Activated CD8-positive, alpha-beta T cell treated with anti-CD3 and anti-CD28 coated beads, Interleukin-2, amount 10 ng/mL, durations not matched to agents 7 days and 5 days (primary cell): ENCODE measurements at regions of chr19 and their contacts with region 1.

Region 1: GRCh38 chr19:18328340-18329034 is 5.6 kb upstream of the LSM4 start:
- DNase-seq: peak; percentile 95
- ATAC-seq: peak; percentile 100
- H3K4me3 Mint-ChIP-seq: peak overlapping the region; percentile 71
- H3K27ac Mint-ChIP-seq: peak overlapping the region; percentile 2
- H3K4me1 Mint-ChIP-seq: peaks cover 22% of the 10 kb centered on the region
- H3K27me3 Mint-ChIP-seq: no peaks in the 10 kb centered on the region

Region 2: GRCh38 chr19:18224525-18225354 is 103.7 kb before region 1 on chr19:
- CTCF ChIA-PET with region 1: interaction called, 10 read pairs
- POLR2A ChIA-PET with region 1: no interaction called
- DNase-seq: peak; percentile 92
- ATAC-seq: peak; percentile 98
- H3K4me3 Mint-ChIP-seq: peak overlapping the region; percentile 77
- H3K27ac Mint-ChIP-seq: peak overlapping the region; percentile 75
- H3K4me1 Mint-ChIP-seq: peaks cover 23% of the 10 kb centered on the region
- H3K27me3 Mint-ChIP-seq: peaks cover 52% of the 10 kb centered on the region

Region 3: DNA sequence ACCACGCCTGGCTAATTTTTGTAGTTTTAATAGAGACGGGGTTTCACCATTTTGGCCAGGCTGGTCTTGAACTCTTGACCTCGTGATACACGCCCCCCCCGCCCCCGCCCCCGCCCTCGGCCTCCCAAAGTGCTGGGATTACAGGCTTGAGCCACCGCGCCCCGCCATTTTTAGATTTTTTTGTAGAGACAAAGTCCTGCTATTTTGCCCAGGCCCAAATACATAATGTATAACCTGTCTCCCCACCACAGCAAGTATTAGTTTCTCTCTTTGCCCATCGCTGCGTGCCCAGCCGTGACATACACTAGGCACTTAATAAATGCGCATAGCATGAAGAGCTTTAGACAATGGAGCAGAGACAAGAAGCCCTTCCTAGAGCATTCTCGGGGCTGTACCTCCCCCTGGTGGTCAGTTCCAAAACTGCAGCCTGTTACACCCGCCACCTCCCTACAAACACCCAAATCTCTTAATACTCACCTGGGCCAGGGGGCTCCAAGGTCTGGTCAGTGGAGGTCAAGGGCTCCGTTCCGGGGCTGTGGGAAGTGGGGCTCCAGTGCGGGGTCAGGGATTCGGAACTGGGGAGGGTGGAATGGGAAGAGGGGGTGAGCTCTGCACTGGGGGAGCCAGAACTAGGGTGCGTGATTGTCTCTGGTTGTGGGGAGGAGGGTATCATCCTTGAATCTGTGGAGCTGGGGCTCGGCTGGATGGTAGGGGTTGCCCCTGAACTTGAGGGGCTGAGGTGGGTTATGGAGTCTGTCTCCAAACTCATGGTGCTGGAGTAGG is 76.7 kb before region 1 on chr19:
- CTCF ChIA-PET with region 1: interaction called, 20 read pairs
- POLR2A ChIA-PET with region 1: no interaction called
- DNase-seq: peak; percentile 88
- ATAC-seq: peak; percentile 74
- H3K4me3 Mint-ChIP-seq: no peak overlapping the region
- H3K27ac Mint-ChIP-seq: no peak overlapping the region
- H3K4me1 Mint-ChIP-seq: no peaks in the 10 kb centered on the region
- H3K27me3 Mint-ChIP-seq: peaks cover 23% of the 10 kb centered on the region

Region 4: DNA sequence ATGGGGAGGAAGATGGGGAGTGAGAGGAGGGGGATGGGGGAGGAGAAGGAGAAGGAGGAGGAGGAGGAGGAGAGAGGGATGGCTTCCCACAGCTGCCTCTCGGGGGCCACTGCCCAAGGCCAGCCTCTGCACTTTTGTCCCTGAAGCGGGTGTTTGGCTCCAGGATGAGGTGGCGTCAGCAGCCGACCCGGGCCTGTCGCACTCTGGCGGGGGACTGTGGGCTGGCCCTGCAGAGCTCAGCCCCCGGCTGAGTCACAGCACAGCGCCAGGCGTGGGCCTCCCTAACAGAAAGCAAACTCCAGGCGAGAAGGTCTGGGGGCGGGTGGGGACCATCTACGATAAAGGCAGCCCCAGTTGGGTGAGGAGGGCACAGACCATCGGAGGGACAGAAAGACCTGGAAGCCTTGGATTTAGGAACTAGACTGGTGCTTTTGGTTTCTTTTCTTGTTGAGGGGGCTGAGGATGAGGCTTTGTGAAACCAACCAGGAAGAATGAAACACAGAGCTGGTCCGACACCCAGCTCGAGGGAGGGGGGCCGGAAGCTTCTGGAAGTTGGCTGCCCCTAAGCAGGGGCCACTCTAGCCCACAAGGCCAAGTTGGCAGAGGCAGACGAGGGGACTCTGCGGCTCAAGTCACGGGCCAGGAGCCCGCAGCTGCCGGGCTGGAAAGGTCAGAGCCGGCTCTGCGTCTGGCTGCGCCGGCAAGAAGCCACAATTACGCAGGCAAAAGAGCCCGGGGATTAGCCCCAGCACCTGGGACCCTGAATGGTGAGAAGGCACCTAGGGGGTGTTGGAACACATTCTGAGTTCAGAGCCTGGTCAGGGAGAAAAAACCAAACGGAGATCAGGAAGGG is 23.8 kb before region 1 on chr19:
- CTCF ChIA-PET with region 1: interaction called, 11 read pairs
- POLR2A ChIA-PET with region 1: interaction called, 8 read pairs
- DNase-seq: peak; percentile 87
- ATAC-seq: peak; percentile 74
- H3K4me3 Mint-ChIP-seq: peak overlapping the region; percentile 99
- H3K27ac Mint-ChIP-seq: peak overlapping the region; percentile 94
- H3K4me1 Mint-ChIP-seq: peaks cover 49% of the 10 kb centered on the region
- H3K27me3 Mint-ChIP-seq: no peaks in the 10 kb centered on the region

Region 5: DNA sequence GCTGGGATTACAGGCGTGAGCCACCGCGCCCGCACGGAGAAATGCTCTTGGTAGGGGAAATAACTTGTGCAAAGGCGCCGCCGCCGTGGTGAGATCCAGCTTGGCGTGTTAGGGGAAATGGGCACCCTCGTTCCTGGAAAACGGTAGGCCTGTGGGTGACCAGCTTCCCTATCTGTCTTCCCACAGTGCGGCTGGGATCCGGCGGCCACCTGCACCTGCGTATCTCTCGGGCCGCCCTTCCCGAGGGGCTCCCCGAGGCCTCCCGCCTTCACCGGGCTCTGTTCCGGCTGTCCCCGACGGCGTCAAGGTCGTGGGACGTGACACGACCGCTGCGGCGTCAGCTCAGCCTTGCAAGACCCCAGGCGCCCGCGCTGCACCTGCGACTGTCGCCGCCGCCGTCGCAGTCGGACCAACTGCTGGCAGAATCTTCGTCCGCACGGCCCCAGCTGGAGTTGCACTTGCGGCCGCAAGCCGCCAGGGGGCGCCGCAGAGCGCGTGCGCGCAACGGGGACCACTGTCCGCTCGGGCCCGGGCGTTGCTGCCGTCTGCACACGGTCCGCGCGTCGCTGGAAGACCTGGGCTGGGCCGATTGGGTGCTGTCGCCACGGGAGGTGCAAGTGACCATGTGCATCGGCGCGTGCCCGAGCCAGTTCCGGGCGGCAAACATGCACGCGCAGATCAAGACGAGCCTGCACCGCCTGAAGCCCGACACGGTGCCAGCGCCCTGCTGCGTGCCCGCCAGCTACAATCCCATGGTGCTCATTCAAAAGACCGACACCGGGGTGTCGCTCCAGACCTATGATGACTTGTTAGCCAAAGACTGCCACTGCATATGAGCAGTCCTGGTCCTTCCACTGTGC is 59.8 kb after region 1 on chr19:
- CTCF ChIA-PET with region 1: interaction called, 22 read pairs
- POLR2A ChIA-PET with region 1: no interaction called
- DNase-seq: peak; percentile 83
- ATAC-seq: peak; percentile 90
- H3K4me3 Mint-ChIP-seq: peak overlapping the region; percentile 58
- H3K27ac Mint-ChIP-seq: no peak overlapping the region
- H3K4me1 Mint-ChIP-seq: peaks cover 18% of the 10 kb centered on the region
- H3K27me3 Mint-ChIP-seq: peaks cover 46% of the 10 kb centered on the region